Activated CD4-positive, alpha-beta T cell treated with anti-CD3 and anti-CD28 coated beads for 36 hours (primary cell): ENCODE measurements at regions of chr11 and their contacts with region 1.

Region 1: GRCh38 chr11:34214961-34215805 is 109.8 kb downstream of the NAT10 start:
- DNase-seq: peak; percentile 92
- ATAC-seq: peak; percentile 99
- H3K4me3 Mint-ChIP-seq: no peak overlapping the region
- H3K27ac Mint-ChIP-seq: peak overlapping the region; percentile 74
- H3K4me1 Mint-ChIP-seq: peaks cover 22% of the 10 kb centered on the region
- H3K27me3 Mint-ChIP-seq: peaks cover 6% of the 10 kb centered on the region

Region 2: GRCh38 chr11:34243726-34244464 is 28.7 kb after region 1 on chr11:
- CTCF ChIA-PET with region 1: interaction called, 7 read pairs
- POLR2A ChIA-PET with region 1: no interaction called
- intact Hi-C with region 1: loop called (anchors 1 to 2 kb)
- DNase-seq: peak; percentile 79
- ATAC-seq: peak; percentile 65
- H3K4me3 Mint-ChIP-seq: no peak overlapping the region
- H3K27ac Mint-ChIP-seq: no peak overlapping the region
- H3K4me1 Mint-ChIP-seq: peaks cover 88% of the 10 kb centered on the region
- H3K27me3 Mint-ChIP-seq: peaks cover 2% of the 10 kb centered on the region